HAP-1 (cell line): ENCODE measurements at regions of chr13 and their contacts with region 1.

Region 1: GRCh38 chr13:67230404-67231288 is 510 bp upstream of the PCDH9 start:
- DNase-seq: peak; percentile 92 to 97
- H3K4me3 ChIP-seq: peak overlapping the region; percentile 73
- H3K4me1 ChIP-seq: peaks cover 6% of the 10 kb centered on the region
- H3K27me3 ChIP-seq: no peaks in the 10 kb centered on the region

Region 2: GRCh38 chr13:66689628-66690027 is 541.0 kb before region 1 on chr13:
- in situ Hi-C with region 1: loop called (anchors 25 kb)
- DNase-seq: peak; percentile 27 to 39
- H3K4me3 ChIP-seq: no peak overlapping the region
- H3K4me1 ChIP-seq: no peaks in the 10 kb centered on the region
- H3K27me3 ChIP-seq: no peaks in the 10 kb centered on the region